Left colon (tissue), 2 donors: ENCODE measurements at regions of chr10 and their contacts with region 1.

Region 1: DNA sequence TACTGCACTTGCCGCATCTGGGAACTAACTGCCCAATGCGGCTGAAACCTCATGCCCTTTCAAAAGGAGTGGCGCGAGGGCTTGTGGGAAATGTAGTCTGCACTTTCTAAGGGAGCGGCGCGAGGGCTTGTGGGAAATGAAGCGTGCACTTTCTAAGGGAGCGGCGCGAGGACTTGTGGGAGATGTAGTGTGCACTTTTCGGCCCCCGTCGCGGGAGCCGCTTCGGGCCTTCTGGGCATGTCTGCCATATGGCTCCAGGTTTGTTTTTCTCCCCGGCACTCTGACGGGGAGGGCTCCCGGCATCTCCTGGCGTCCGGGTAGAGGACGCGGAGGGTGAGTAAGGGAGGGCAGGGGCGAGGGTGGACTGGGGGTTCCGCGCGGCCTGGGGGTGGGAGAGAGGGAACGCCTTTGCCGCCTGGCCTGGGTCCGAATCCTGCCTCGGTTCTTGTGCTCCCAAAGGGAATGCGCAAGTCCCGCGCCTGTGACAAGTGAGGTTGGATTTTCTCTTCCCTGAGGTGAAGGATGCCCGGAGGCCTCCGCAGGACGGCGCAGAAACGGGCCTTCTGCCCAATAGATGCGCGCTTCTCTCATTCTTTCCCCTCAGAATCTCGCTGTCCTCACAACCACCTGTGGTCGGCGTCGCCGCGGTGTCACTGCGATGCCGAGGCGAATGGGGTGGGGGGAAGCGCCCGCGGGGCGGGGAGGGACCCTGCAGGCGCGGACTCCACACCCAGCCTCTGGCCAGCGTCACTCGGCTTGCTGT is at the start of gene ZNF37A:
- DNase-seq: peak; percentile 95 to 97
- ATAC-seq: peak; percentile 98
- total RNA-seq, gene ZNF37A: 8.8 TPM

Region 2: DNA sequence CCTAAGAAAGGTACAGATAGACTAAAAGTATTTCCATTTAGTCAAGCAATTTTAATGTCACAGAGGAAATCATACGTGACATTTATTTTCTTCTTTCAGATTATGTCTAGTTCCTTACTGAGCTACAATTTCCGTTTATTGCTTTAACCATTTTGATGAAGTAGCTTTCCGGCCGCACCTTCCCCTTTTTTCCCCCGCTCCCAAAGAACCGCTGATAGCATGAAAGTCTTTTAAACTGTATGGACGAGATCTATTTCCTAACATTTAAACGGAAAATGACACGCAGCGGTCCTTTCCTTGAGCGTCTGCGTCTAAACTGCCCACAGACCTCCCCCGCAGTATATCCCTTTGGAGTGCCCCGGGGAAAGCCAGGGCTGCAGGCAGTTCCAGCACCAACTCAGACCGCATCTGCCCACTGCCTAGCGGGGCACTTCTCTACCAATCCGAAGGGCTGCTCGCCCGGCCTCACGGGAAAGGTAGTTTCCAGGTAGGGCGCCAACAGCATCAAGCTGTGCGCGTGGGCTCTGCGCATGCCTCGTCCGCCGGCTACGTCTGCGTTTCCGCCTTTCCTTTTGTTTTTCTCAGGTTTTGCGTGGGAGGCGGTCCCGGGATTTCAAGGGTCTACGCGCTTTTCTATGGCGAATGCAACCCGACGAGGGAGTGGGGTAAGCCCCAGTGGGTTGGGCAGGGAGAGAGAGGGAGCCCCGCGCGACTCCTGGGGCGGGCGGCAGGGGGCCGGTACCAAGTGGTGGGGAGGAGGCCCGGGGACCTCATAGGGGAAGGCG is 84.0 kb before region 1 on chr10 and contains the start of gene ZNF33A:
- intact Hi-C with region 1: loop called in 1 of 2 experiments (anchors 5 kb)
- DNase-seq: peak; percentile 94 to 97
- ATAC-seq: peak; percentile 96
- total RNA-seq, gene ZNF33A: 28.2 to 32.9 TPM